Activated B cell treated with CpG ODN at 0.5 μM for 24 hours (primary cell): ENCODE measurements at regions of chr6 and their contacts with region 1.

Region 1: GRCh38 chr6:153002607-153003365 is at the start of gene MTRF1L:
- DNase-seq: peak; percentile 77
- ATAC-seq: peak; percentile 85
- H3K4me3 Mint-ChIP-seq: peak within 1 kb of the TSS; percentile 99
- H3K27ac Mint-ChIP-seq: peak within 1 kb of the TSS; percentile 93
- H3K4me1 Mint-ChIP-seq: peaks cover 42% of the 10 kb centered on the region
- H3K27me3 Mint-ChIP-seq: no peaks in the 10 kb centered on the region
- CTCF ChIP-seq: no peak
- total RNA-seq, gene MTRF1L: 20.7 and 21.3 TPM in 2 replicates

Region 2: DNA sequence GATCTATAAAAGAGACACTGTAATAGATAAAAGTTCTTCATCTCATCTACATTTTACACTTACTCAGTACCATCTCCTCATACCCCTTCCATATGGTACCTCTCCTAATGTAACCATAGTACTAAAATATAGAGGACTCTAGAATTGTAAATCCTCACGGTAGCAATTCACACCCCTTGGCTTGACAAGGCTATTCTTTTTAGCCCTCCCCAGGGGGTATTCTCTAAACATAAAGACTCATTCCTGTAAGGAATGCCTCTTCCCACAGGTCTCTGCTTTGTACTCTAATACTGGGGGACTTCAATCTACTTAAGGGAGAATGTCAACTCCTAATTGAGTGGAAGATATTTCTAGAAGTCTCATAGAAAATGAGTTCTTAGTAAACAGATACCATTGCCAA is 166.3 kb before region 1 on chr6:
- CTCF ChIA-PET with region 1: no interaction called
- POLR2A ChIA-PET with region 1: no interaction called
- intact Hi-C with region 1: no loop called
- DNase-seq: no peak
- ATAC-seq: no peak
- H3K4me3 Mint-ChIP-seq: no peak overlapping the region
- H3K27ac Mint-ChIP-seq: no peak overlapping the region
- H3K4me1 Mint-ChIP-seq: no peaks in the 10 kb centered on the region
- H3K27me3 Mint-ChIP-seq: peaks cover 2% of the 10 kb centered on the region
- CTCF ChIP-seq: no peak

Region 3: DNA sequence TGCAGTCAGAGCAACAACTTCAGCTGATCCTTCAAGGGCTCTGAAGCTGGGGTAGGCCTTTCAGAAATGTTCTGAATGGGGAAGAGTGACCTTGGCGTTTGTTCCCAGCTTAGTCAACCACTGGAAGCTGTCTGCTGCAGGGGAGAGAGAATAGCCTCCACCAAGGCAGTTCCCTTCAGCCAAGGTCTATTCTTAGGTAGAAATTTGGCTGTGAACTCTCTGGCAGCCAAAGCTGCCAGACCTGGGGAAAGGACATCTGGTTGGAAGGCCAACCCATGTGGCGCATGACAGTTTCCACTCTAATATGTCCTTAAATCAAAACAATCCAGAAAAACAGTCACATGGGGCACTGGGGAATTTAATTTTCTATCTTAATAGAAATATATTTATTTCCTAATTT is 80.1 kb before region 1 on chr6:
- CTCF ChIA-PET with region 1: no interaction called
- POLR2A ChIA-PET with region 1: no interaction called
- intact Hi-C with region 1: no loop called
- DNase-seq: no peak
- ATAC-seq: no peak
- H3K4me3 Mint-ChIP-seq: no peak overlapping the region
- H3K27ac Mint-ChIP-seq: no peak overlapping the region
- H3K4me1 Mint-ChIP-seq: no peaks in the 10 kb centered on the region
- H3K27me3 Mint-ChIP-seq: peaks cover 6% of the 10 kb centered on the region
- CTCF ChIP-seq: no peak

Region 4: GRCh38 chr6:152982768-152983636 is 19.8 kb before region 1 on chr6 and contains the start of gene FBXO5:
- CTCF ChIA-PET with region 1: interaction called, 3 read pairs
- POLR2A ChIA-PET with region 1: interaction called, 26 read pairs
- intact Hi-C with region 1: loop called (anchors 1 kb)
- DNase-seq: peak; percentile 95
- ATAC-seq: peak; percentile 92
- H3K4me3 Mint-ChIP-seq: peak within 1 kb of the TSS; percentile 100
- H3K27ac Mint-ChIP-seq: peak within 1 kb of the TSS; percentile 100
- H3K4me1 Mint-ChIP-seq: peaks cover 41% of the 10 kb centered on the region
- H3K27me3 Mint-ChIP-seq: no peaks in the 10 kb centered on the region
- CTCF ChIP-seq: no peak
- total RNA-seq, gene FBXO5: 11.9 and 13.3 TPM in 2 replicates

Region 5: DNA sequence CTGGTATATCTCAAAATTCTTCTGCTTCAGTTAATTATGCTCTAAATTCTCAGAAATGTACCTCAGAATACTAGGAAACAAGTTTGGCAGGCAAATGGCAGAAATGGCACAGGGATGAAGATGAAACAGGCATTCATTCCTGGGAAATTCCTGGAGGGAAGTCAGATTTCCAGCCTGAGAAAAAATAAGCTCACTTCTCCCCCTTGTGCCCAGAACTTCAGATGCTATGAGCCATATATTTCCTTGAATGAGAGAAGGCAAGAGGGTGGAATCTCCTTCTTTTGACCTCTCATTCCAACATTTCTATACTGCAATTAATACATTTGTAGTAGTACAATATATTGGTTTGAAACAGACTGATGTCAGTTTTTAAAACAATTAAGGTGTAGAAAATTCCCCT is 105.5 kb after region 1 on chr6:
- CTCF ChIA-PET with region 1: no interaction called
- POLR2A ChIA-PET with region 1: no interaction called
- intact Hi-C with region 1: no loop called
- DNase-seq: no peak
- ATAC-seq: no peak
- H3K4me3 Mint-ChIP-seq: no peak overlapping the region
- H3K27ac Mint-ChIP-seq: no peak overlapping the region
- H3K4me1 Mint-ChIP-seq: no peaks in the 10 kb centered on the region
- H3K27me3 Mint-ChIP-seq: no peaks in the 10 kb centered on the region
- CTCF ChIP-seq: no peak